HepG2 (cell line): ENCODE measurements at regions of chr15 and their contacts with region 1.

Region 1: DNA sequence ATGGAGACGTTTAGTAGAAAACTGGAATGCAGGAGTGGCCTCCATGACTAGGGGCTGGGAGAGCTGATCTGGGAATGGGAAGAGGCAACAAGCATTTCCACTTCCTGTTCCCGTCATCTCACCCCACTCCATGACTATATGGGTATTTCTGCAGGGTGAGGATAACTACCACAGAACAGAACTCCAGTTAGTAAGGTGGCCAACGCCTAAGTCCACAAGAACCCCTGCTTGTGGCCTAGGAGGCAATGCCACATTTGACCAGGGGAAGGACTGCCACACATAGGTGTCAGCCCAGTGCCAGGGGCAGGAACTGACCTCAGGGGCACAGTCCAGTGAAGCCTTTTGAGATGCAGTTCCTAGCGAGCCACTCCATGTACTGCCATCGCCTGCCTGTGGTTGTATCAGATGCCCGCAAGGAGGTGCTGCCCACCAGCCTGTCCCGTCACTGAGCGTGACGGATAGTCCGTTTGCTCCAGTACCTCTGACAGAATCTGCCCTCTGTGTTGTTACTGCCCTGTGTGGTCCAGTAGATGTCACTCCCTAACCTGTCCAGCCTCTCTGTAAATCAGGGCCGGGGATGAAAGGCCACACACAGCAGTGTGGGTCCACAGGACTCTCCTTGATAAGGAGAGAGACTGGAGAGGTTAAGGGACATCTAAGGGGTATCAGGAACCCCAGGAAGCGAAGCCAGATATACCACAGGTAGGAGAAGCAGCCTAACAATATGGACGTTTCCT is 3.5 kb upstream of the MTFMT start:
- DNase-seq: peak; percentile 95
- ATAC-seq: peak; percentile 94
- H3K4me3 ChIP-seq: peak overlapping the region; percentile 32 to 52 (median 34); a peak in 5 of 6 replicates
- H3K27ac ChIP-seq: peak overlapping the region; percentile 31
- H3K4me1 ChIP-seq: peaks cover 64% of the 10 kb centered on the region
- H3K27me3 ChIP-seq: no peaks in the 10 kb centered on the region; a peak in 1 of 5 replicates
- CTCF ChIP-seq: peak; percentile 99
- EP300 ChIP-seq: 0 out of 4 replicates have a peak, but pooled peaks of 1 of the 2 experiments have one; percentile 15
- POLR2A ChIP-seq: peak in 1 of 2 experiments; percentile 52; a peak in 1 of 4 replicates
- RAD21 ChIP-seq: peak; percentile 98

Region 2: DNA sequence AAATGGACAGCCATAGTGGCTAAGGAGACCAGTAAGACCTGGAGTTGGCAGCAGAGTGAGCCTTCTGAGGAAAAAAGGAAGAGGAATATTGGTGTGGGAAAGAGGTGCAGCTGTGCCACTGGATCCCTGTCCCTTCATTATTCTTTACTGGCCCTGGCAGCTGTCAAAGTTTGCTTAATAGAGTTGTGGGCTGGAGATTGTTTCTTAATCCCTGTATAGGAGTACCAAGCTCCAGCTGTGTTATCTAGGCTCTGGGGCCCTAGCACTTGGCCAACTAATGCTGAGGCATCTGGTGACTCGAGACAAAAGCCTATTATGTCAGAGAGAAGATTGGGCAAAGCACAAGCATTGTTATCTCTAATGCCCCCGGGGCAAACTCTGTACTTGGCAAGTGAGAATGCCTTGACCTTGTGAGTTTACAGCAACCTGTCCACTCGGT is 511.2 kb before region 1 on chr15:
- CTCF ChIA-PET with region 1: no interaction called
- POLR2A ChIA-PET with region 1: no interaction called
- in situ Hi-C with region 1: no loop called
- intact Hi-C with region 1: no loop called
- DNase-seq: peak; percentile 78
- ATAC-seq: peak; percentile 86
- H3K4me3 ChIP-seq: no peak overlapping the region
- H3K27ac ChIP-seq: no peak overlapping the region
- H3K4me1 ChIP-seq: peaks cover 33% of the 10 kb centered on the region
- H3K27me3 ChIP-seq: no peaks in the 10 kb centered on the region
- CTCF ChIP-seq: no peak
- EP300 ChIP-seq: peak in 1 of 2 experiments; percentile 52; a peak in 1 of 4 replicates
- POLR2A ChIP-seq: no peak
- RAD21 ChIP-seq: no peak

Region 3: GRCh38 chr15:65044724-65045481 is 11.9 kb after region 1 on chr15 and contains the start of gene SLC51B:
- CTCF ChIA-PET with region 1: interaction called, 3 read pairs
- POLR2A ChIA-PET with region 1: interaction called, 7 read pairs
- in situ Hi-C with region 1: no loop called
- intact Hi-C with region 1: loop called (anchors 1 kb)
- DNase-seq: peak; percentile 99
- ATAC-seq: peak; percentile 94
- H3K4me3 ChIP-seq: peak within 1 kb of the TSS; percentile 18 to 44 (median 43); a peak in 5 of 6 replicates
- H3K27ac ChIP-seq: peak within 1 kb of the TSS; percentile 89
- H3K4me1 ChIP-seq: peaks cover 83% of the 10 kb centered on the region
- H3K27me3 ChIP-seq: no peaks in the 10 kb centered on the region
- CTCF ChIP-seq: 0 out of 2 replicates have a peak, but pooled peaks have one; percentile 17
- EP300 ChIP-seq: peak; percentile 27 to 87; a peak in 2 of 4 replicates
- POLR2A ChIP-seq: no peak; a peak in 3 of 4 replicates
- RAD21 ChIP-seq: no peak
- total RNA-seq, gene SLC51B: 14.4 and 17.1 TPM in 2 replicates

Region 4: GRCh38 chr15:65077981-65078352 is 45.0 kb after region 1 on chr15:
- CTCF ChIA-PET with region 1: interaction called, 10 read pairs
- POLR2A ChIA-PET with region 1: no interaction called
- in situ Hi-C with region 1: loop called (anchors 10 kb)
- intact Hi-C with region 1: loop called (anchors 2 kb)
- DNase-seq: no peak
- ATAC-seq: no peak
- H3K4me3 ChIP-seq: no peak overlapping the region
- H3K27ac ChIP-seq: no peak overlapping the region
- H3K4me1 ChIP-seq: peaks cover 41% of the 10 kb centered on the region
- H3K27me3 ChIP-seq: peaks cover 0 to 9% of the 10 kb centered on the region in 2 experiments; a peak in 2 of 5 replicates
- CTCF ChIP-seq: peak; percentile 50
- EP300 ChIP-seq: no peak
- POLR2A ChIP-seq: no peak
- RAD21 ChIP-seq: no peak

Region 5: GRCh38 chr15:65101411-65101890 is 68.5 kb after region 1 on chr15:
- CTCF ChIA-PET with region 1: interaction called, 56 read pairs
- POLR2A ChIA-PET with region 1: interaction called, 3 read pairs
- in situ Hi-C with region 1: no loop called
- intact Hi-C with region 1: loop called (anchors 1 kb)
- DNase-seq: peak; percentile 50
- ATAC-seq: peak; percentile 76
- H3K4me3 ChIP-seq: no peak overlapping the region
- H3K27ac ChIP-seq: no peak overlapping the region
- H3K4me1 ChIP-seq: no peaks in the 10 kb centered on the region
- H3K27me3 ChIP-seq: no peaks in the 10 kb centered on the region
- CTCF ChIP-seq: peak; percentile 88
- EP300 ChIP-seq: no peak
- POLR2A ChIP-seq: no peak
- RAD21 ChIP-seq: peak; percentile 88

Region 6: GRCh38 chr15:65184868-65185738 is 152.1 kb after region 1 on chr15 and contains the start of gene CLPX:
- CTCF ChIA-PET with region 1: interaction called, 6 read pairs
- POLR2A ChIA-PET with region 1: interaction called, 4 read pairs
- in situ Hi-C with region 1: no loop called
- intact Hi-C with region 1: loop called (anchors 10 kb)
- DNase-seq: peak; percentile 96
- ATAC-seq: peak; percentile 89
- H3K4me3 ChIP-seq: peak within 1 kb of the TSS; percentile 81 to 97 (median 90)
- H3K27ac ChIP-seq: peak within 1 kb of the TSS; percentile 92
- H3K4me1 ChIP-seq: peaks cover 53% of the 10 kb centered on the region
- H3K27me3 ChIP-seq: no peaks in the 10 kb centered on the region; a peak in 1 of 5 replicates
- CTCF ChIP-seq: no peak
- EP300 ChIP-seq: peak; percentile 23 to 41; a peak in 1 of 4 replicates
- POLR2A ChIP-seq: peak; percentile 80 to 89
- RAD21 ChIP-seq: no peak
- total RNA-seq, gene CLPX: 61.3 and 100 TPM in 2 replicates

Region 7: GRCh38 chr15:65298731-65299130 is 265.8 kb after region 1 on chr15:
- CTCF ChIA-PET with region 1: no interaction called
- POLR2A ChIA-PET with region 1: interaction called, 3 read pairs
- in situ Hi-C with region 1: loop called (anchors 10 kb)
- intact Hi-C with region 1: loop called (anchors 5 kb)
- DNase-seq: no peak
- ATAC-seq: no peak
- H3K4me3 ChIP-seq: peak overlapping the region; percentile 35 to 73 (median 49)
- H3K27ac ChIP-seq: no peak overlapping the region
- H3K4me1 ChIP-seq: peaks cover 51% of the 10 kb centered on the region
- H3K27me3 ChIP-seq: no peaks in the 10 kb centered on the region; a peak in 1 of 5 replicates
- CTCF ChIP-seq: no peak
- EP300 ChIP-seq: no peak
- POLR2A ChIP-seq: no peak
- RAD21 ChIP-seq: no peak